A673 (cell line): ENCODE measurements at regions of chr14 and their contacts with region 1.

Region 1: GRCh38 chr14:21647380-21647779 is 6.3 kb upstream of the OR4E2 start:
- DNase-seq: peak; percentile 75
- H3K4me3 ChIP-seq: peak overlapping the region; percentile 10
- H3K27ac ChIP-seq: peak overlapping the region; percentile 100
- H3K4me1 ChIP-seq: peaks cover 11% of the 10 kb centered on the region
- H3K27me3 ChIP-seq: no peaks in the 10 kb centered on the region
- CTCF ChIP-seq: no peak

Region 2: GRCh38 chr14:20429801-20430669 is 1217.3 kb before region 1 on chr14:
- CTCF ChIA-PET with region 1: no interaction called
- POLR2A ChIA-PET with region 1: interaction called, 38 read pairs
- intact Hi-C with region 1: no loop called
- DNase-seq: no peak
- H3K4me3 ChIP-seq: no peak overlapping the region
- H3K27ac ChIP-seq: no peak overlapping the region
- H3K4me1 ChIP-seq: no peaks in the 10 kb centered on the region
- H3K27me3 ChIP-seq: no peaks in the 10 kb centered on the region
- CTCF ChIP-seq: no peak

Region 3: GRCh38 chr14:21408147-21408546 is 239.2 kb before region 1 on chr14:
- CTCF ChIA-PET with region 1: no interaction called
- POLR2A ChIA-PET with region 1: no interaction called
- intact Hi-C with region 1: no loop called
- DNase-seq: no peak
- H3K4me3 ChIP-seq: no peak overlapping the region
- H3K27ac ChIP-seq: no peak overlapping the region
- H3K4me1 ChIP-seq: no peaks in the 10 kb centered on the region
- H3K27me3 ChIP-seq: no peaks in the 10 kb centered on the region
- CTCF ChIP-seq: no peak

Region 4: GRCh38 chr14:21668377-21668776 is 21.0 kb after region 1 on chr14:
- CTCF ChIA-PET with region 1: interaction called, 4 read pairs
- POLR2A ChIA-PET with region 1: interaction called, 22 read pairs
- intact Hi-C with region 1: no loop called
- DNase-seq: no peak
- H3K4me3 ChIP-seq: no peak overlapping the region
- H3K27ac ChIP-seq: no peak overlapping the region
- H3K4me1 ChIP-seq: peaks cover 28% of the 10 kb centered on the region
- H3K27me3 ChIP-seq: no peaks in the 10 kb centered on the region
- CTCF ChIP-seq: no peak

Region 5: GRCh38 chr14:23095196-23096108 is 1448.1 kb after region 1 on chr14 and contains the start of gene C14orf119:
- CTCF ChIA-PET with region 1: no interaction called
- POLR2A ChIA-PET with region 1: interaction called, 12 read pairs
- intact Hi-C with region 1: no loop called
- DNase-seq: peak; percentile 100
- H3K4me3 ChIP-seq: peak within 1 kb of the TSS; percentile 64
- H3K27ac ChIP-seq: peak within 1 kb of the TSS; percentile 94
- H3K4me1 ChIP-seq: peaks cover 28% of the 10 kb centered on the region
- H3K27me3 ChIP-seq: no peaks in the 10 kb centered on the region
- CTCF ChIP-seq: no peak
- total RNA-seq, gene C14orf119: 50.3 and 54.5 TPM in 2 replicates